Activated CD4-positive, alpha-beta T cell treated with anti-CD3 and anti-CD28 coated beads for 36 hours (primary cell): ENCODE measurements at regions of chr3 and their contacts with region 1.

Region 1: GRCh38 chr3:16511681-16512434 is 1.6 kb downstream of the RFTN1 start:
- DNase-seq: peak; percentile 92
- ATAC-seq: peak; percentile 72
- H3K4me3 Mint-ChIP-seq: peak overlapping the region; percentile 99
- H3K27ac Mint-ChIP-seq: peak overlapping the region; percentile 88
- H3K4me1 Mint-ChIP-seq: peaks cover 73% of the 10 kb centered on the region
- H3K27me3 Mint-ChIP-seq: no peaks in the 10 kb centered on the region

Region 2: DNA sequence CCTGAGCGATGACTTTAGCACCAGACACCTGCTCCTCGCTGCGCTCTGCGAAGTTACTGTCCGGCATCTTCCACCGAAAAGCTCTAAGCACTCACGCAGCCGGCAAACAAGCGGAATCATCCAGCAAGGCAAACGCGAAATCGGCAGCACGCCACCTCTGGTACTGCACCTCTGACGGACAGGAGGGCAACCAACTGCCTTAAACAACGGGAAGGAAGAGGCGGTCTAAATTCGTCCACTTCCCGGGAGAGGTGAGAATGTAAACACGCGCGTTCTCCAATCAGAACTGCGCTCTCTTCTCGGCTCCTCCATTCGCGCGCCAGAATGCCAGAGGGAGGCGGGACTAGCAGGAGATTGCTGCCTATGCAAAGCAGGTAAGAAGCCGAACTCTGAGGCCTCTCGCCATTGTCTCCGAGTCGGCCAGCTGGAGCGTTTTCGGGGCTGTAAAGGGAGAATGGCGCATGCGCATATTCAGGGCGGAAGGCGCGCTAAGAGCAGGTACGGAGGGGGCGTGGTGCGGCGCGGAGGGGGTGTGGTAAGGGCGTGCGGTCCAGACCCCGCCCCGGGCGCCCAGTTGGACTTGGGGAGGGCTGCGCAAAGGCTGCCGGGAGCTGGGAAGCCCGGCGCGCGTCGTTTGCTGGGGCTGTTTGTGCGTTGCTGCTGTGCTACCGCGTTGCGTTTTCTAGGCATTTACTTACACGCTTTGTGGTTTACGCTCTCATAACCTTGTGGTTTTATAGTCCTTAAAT is 910.3 kb before region 1 on chr3 and contains the starts of genes BTD and HACL1:
- CTCF ChIA-PET with region 1: no interaction called
- POLR2A ChIA-PET with region 1: no interaction called
- intact Hi-C with region 1: loop called in 1 of 2 experiments (anchors 5 kb)
- DNase-seq: peak; percentile 99
- ATAC-seq: peak; percentile 94
- H3K4me3 Mint-ChIP-seq: peak within 1 kb of the TSS; percentile 100
- H3K27ac Mint-ChIP-seq: peak within 1 kb of the TSS; percentile 98
- H3K4me1 Mint-ChIP-seq: peaks cover 41% of the 10 kb centered on the region
- H3K27me3 Mint-ChIP-seq: no peaks in the 10 kb centered on the region
- total RNA-seq, gene BTD: 3.8 to 4.4 TPM
- total RNA-seq, gene HACL1: 22.3 to 23.2 TPM

Region 3: DNA sequence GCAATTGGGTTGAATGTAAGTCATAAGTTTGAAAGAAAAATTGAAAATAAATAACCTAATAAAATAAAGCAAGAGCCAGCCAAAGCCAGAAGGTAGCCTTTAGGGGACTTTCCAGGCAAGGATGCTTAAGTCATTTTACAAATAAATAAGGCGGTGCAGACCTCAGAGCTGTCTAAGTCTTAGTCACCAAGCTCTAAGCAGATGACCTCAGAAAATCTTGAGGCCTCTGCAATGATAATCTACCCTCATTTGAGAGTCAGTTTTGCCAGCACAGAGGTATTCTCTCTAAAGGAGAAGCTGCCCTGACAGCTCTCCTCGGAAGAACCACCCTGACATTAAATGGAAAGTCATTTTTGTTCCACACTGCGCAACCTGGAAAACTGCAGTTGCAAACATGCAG is 132.9 kb before region 1 on chr3:
- CTCF ChIA-PET with region 1: no interaction called
- POLR2A ChIA-PET with region 1: no interaction called
- intact Hi-C with region 1: loop called (anchors 2 to 5 kb)
- DNase-seq: peak; percentile 45
- ATAC-seq: peak; percentile 66
- H3K4me3 Mint-ChIP-seq: no peak overlapping the region
- H3K27ac Mint-ChIP-seq: peak overlapping the region; percentile 89
- H3K4me1 Mint-ChIP-seq: peaks cover 95% of the 10 kb centered on the region
- H3K27me3 Mint-ChIP-seq: no peaks in the 10 kb centered on the region

Region 4: DNA sequence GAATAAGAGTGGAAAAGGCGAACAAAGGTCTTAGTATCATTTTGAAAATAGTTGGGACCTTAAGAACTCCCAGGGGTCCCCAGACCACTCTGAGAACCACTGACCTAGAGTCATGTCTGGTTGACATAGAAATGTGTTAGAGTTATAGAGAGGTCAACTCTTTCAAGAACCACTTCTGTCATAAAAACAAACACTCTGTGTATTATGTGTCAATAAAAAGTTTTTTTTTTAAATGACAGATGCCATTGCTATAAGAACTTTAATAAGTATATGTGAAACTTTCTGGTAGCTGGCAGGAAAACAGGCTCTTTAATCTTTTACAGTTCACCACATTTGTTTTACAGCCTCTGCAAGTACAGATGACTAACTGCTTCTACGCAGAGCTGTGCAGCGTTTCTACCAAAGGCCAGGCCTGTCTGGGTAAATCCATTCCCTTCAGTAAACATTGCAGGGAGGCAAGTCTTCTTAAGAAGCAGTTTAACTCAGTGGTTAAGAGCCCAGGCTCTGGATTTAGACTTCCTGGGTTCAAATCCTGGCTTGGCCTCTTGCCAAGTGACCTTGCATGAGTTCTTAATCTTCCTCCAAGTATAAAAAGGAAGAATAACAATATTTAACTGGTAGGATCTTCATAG is 55.0 kb before region 1 on chr3:
- CTCF ChIA-PET with region 1: no interaction called
- POLR2A ChIA-PET with region 1: no interaction called
- intact Hi-C with region 1: no loop called
- DNase-seq: peak; percentile 31
- ATAC-seq: peak; percentile 85
- H3K4me3 Mint-ChIP-seq: no peak overlapping the region
- H3K27ac Mint-ChIP-seq: no peak overlapping the region
- H3K4me1 Mint-ChIP-seq: peaks cover 30% of the 10 kb centered on the region
- H3K27me3 Mint-ChIP-seq: no peaks in the 10 kb centered on the region

Region 5: DNA sequence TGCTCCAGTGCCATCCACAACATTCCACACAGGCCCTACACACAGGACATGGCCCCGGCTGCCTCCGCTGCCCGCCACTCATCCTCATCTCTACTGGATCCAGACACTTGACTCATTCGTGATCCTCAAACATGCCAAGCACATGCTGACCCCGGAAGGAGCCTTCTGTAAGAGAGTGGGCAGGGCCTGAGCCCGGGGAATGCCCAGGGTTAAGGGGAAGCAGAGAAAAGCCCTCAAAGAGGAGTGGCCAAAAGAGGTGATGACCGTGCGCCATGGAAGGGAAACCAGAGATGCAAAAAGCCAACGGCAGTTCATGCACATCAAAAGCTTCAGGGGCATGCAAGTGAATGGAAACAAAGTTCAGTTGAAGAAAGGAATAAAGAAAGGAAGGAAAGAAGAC is 44.5 kb before region 1 on chr3:
- CTCF ChIA-PET with region 1: interaction called, 5 read pairs
- POLR2A ChIA-PET with region 1: interaction called, 4 read pairs
- intact Hi-C with region 1: loop called in 1 of 2 experiments (anchors 5 kb)
- DNase-seq: peak; percentile 78
- ATAC-seq: peak; percentile 79
- H3K4me3 Mint-ChIP-seq: peak overlapping the region; percentile 50
- H3K27ac Mint-ChIP-seq: peak overlapping the region; percentile 92
- H3K4me1 Mint-ChIP-seq: peaks cover 66% of the 10 kb centered on the region
- H3K27me3 Mint-ChIP-seq: no peaks in the 10 kb centered on the region

Region 6: GRCh38 chr3:16550676-16551341 is 39.0 kb after region 1 on chr3:
- CTCF ChIA-PET with region 1: interaction called, 4 read pairs
- POLR2A ChIA-PET with region 1: no interaction called
- intact Hi-C with region 1: loop called (anchors 2 kb)
- DNase-seq: peak; percentile 87
- ATAC-seq: peak; percentile 99
- H3K4me3 Mint-ChIP-seq: no peak overlapping the region
- H3K27ac Mint-ChIP-seq: peak overlapping the region; percentile 93
- H3K4me1 Mint-ChIP-seq: peaks cover 14% of the 10 kb centered on the region
- H3K27me3 Mint-ChIP-seq: no peaks in the 10 kb centered on the region